Gastrocnemius medialis (tissue), 4 donors: ENCODE measurements at regions of chr11 and their contacts with region 1.

Region 1: GRCh38 chr11:61947486-61948210 is 2.5 kb upstream of the BEST1 start:
- DNase-seq: peak; percentile 72 to 82
- ATAC-seq: peak; percentile 89 to 91
- H3K4me3 ChIP-seq: no peak overlapping the region
- H3K27ac ChIP-seq: no peak overlapping the region
- H3K4me1 ChIP-seq: no peaks in the 10 kb centered on the region
- H3K27me3 ChIP-seq: no peaks in the 10 kb centered on the region
- CTCF ChIP-seq: peak; percentile 80 to 92 (median 90)
- POLR2A ChIP-seq: no peak

Region 2: DNA sequence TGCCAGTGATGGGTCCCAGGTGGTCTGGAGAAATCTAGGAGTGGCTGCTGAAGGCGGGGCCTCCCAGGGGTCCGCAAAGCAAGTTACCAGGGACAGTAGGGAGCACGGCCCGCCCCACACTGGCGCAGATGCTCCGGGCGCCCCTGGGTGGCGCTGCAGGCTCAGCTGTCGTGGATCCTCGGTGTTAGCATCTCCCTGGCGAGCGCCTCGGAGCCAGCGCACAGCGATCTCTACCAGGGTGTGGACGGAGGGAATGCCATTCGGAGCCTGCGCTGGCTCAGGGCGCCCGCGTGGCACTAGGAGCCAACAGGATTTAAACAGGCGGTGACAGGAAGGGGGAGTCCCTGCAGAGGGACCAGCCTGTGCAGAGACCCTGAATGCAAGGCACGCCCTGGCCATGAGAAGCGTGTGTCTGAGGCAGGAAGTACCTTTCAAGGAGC is 76.5 kb before region 1 on chr11:
- in situ Hi-C with region 1: no loop called
- intact Hi-C with region 1: loop called (anchors 1 kb)
- DNase-seq: peak; percentile 47 to 62
- ATAC-seq: peak; percentile 87 to 88
- H3K4me3 ChIP-seq: no peak overlapping the region
- H3K27ac ChIP-seq: peak overlapping the region; percentile 48 to 70 (median 66)
- H3K4me1 ChIP-seq: peaks cover 0 to 5% of the 10 kb centered on the region in 2 donors
- H3K27me3 ChIP-seq: no peaks in the 10 kb centered on the region
- CTCF ChIP-seq: peak; percentile 87 to 96 (median 93)
- POLR2A ChIP-seq: no peak

Region 3: GRCh38 chr11:61891331-61892084 is 56.1 kb before region 1 on chr11 and contains the start of gene FADS3:
- in situ Hi-C with region 1: loop called in 3 of 4 experiments (anchors 5 to 10 kb)
- intact Hi-C with region 1: no loop called
- DNase-seq: peak; percentile 84 to 92
- ATAC-seq: peak; percentile 53 to 58
- H3K4me3 ChIP-seq: peak within 1 kb of the TSS; percentile 73 to 98 (median 90)
- H3K27ac ChIP-seq: peak within 1 kb of the TSS; percentile 82 to 96 (median 92)
- H3K4me1 ChIP-seq: peaks cover 32 to 34% of the 10 kb centered on the region in 2 donors
- H3K27me3 ChIP-seq: no peaks in the 10 kb centered on the region
- CTCF ChIP-seq: peak in 4 of 5 experiments; percentile 4 to 30 (median 15)
- POLR2A ChIP-seq: peak; percentile 92 to 98
- total RNA-seq, gene FADS3: 40.7 to 196 (median 89.0) TPM

Region 4: DNA sequence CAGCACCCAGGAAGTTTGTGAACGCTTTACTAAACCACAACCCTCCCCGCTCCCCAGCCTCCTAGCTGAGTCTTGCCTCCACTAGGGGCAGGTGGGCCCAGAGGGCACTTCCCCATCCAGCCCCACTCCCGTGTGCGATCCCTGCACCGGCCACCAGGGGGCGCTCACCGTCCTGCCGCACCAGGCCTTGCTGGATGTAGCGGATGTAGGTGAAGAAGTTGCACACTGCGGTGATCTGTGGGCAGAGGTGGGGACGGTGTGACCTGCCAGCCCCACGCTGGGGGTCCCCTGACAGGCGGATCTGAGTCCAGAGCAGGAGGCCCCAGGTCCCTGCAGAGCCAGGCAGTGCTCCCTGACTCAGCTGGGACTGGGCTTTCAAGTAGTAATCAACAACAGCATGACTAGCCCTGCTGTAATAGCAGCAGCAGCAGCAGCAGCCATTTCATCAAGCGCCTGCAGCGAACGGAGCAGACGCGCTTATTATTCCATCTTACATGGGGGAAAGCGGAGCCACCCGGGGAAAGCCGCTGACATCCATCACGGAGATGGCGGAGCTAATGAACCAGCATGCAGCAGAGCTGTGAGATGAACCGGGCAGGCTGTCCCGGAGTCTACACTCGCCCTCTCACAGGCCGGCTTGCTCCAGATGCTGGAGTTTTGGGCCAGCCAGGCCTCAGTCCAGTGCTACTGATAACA is 48.4 kb before region 1 on chr11:
- in situ Hi-C with region 1: loop called in 2 of 4 experiments (anchors 5 to 10 kb)
- intact Hi-C with region 1: loop called (anchors 1 kb)
- DNase-seq: peak; percentile 57 to 74
- ATAC-seq: peak; percentile 80 to 88
- H3K4me3 ChIP-seq: no peak overlapping the region
- H3K27ac ChIP-seq: peak overlapping the region in 3 of 4 donors; percentile 1 to 30 (median 29)
- H3K4me1 ChIP-seq: no peaks in the 10 kb centered on the region
- H3K27me3 ChIP-seq: no peaks in the 10 kb centered on the region
- CTCF ChIP-seq: peak; percentile 98 to 100 (median 99)
- POLR2A ChIP-seq: no peak

Region 5: DNA sequence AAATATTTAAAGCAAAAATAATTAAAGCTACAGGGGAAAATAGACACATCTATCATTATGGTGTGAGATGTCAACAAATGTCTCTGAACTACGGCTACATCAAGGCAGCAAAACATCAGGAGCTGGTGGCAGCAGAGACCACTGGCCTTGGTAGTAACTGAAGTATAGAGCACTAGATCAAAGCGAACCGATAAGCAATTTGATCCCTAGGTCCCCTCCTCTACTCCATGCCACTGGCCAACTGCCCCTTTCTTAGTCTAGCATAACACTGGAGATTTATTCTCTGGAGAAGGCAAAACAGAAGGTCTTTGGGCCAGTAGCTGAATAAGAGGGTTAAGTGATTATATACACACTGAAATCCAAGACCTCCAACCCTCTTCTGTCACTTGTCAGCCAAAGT is 16.7 kb before region 1 on chr11:
- in situ Hi-C with region 1: no loop called
- intact Hi-C with region 1: no loop called
- DNase-seq: no peak
- ATAC-seq: no peak
- H3K4me3 ChIP-seq: no peak overlapping the region
- H3K27ac ChIP-seq: no peak overlapping the region
- H3K4me1 ChIP-seq: no peaks in the 10 kb centered on the region
- H3K27me3 ChIP-seq: no peaks in the 10 kb centered on the region
- CTCF ChIP-seq: no peak
- POLR2A ChIP-seq: no peak

Region 6: DNA sequence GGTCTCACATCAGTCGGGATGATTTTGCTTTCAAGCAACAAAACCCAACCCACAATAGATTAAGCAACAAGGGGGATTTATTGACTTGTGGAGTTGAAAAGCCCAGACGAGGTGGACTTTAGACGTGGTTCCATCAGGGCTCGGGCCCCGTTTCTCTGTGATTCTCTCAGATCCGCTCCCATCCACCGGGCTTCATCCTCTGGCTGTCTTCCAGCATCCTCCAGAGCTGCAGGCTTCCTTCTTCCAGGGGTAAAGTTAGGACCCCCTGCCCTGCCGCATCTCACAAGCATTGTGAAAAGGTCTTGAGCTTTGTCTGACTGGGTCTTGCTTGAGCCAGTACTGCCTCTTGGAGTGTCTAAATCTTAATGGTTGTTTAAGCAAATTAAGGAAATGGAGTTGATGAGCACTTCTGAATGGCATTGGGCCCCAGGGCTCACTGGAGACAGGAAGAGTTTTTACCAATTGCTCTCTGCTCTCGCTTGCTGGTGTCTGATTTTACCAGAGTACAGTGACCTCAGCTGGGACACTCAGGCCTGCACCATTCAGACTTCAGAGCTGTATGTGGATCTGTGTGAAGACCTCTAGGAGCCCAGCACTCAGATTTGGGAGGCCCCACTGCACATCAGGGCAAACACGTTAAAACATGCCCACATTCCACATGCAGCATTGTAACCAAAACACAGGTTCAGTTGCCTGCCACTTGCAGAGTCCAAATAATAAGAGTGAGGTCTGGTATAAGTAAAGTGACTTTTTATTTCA is 33.3 kb after region 1 on chr11:
- in situ Hi-C with region 1: no loop called
- intact Hi-C with region 1: no loop called
- DNase-seq: no peak
- ATAC-seq: no peak
- H3K4me3 ChIP-seq: no peak overlapping the region
- H3K27ac ChIP-seq: no peak overlapping the region
- H3K4me1 ChIP-seq: peaks cover 5 to 14% of the 10 kb centered on the region in 2 donors
- H3K27me3 ChIP-seq: no peaks in the 10 kb centered on the region
- CTCF ChIP-seq: no peak
- POLR2A ChIP-seq: no peak

Region 7: GRCh38 chr11:62081378-62082291 is 134.0 kb after region 1 on chr11:
- in situ Hi-C with region 1: no loop called
- intact Hi-C with region 1: loop called (anchors 2 kb)
- DNase-seq: peak; percentile 59 to 64
- ATAC-seq: peak; percentile 83 to 88
- H3K4me3 ChIP-seq: no peak overlapping the region
- H3K27ac ChIP-seq: no peak overlapping the region
- H3K4me1 ChIP-seq: peaks cover 0 to 7% of the 10 kb centered on the region in 2 donors
- H3K27me3 ChIP-seq: no peaks in the 10 kb centered on the region
- CTCF ChIP-seq: peak; percentile 79 to 93 (median 91)
- POLR2A ChIP-seq: no peak

Region 8: GRCh38 chr11:62108017-62108750 is 160.5 kb after region 1 on chr11:
- in situ Hi-C with region 1: no loop called
- intact Hi-C with region 1: loop called (anchors 5 kb)
- DNase-seq: no peak
- ATAC-seq: peak; percentile 42 to 79
- H3K4me3 ChIP-seq: no peak overlapping the region
- H3K27ac ChIP-seq: no peak overlapping the region
- H3K4me1 ChIP-seq: peaks cover 15 to 16% of the 10 kb centered on the region in 2 donors
- H3K27me3 ChIP-seq: no peaks in the 10 kb centered on the region
- CTCF ChIP-seq: peak; percentile 52 to 88 (median 83)
- POLR2A ChIP-seq: no peak